ENCODE measurements at regions of chr1 and their contacts with region 1.

Region 1: GRCh38 chr1:226407497-226408284 is at the start of gene PARP1:
- DNase-seq: peak; percentile 99

Region 2: DNA sequence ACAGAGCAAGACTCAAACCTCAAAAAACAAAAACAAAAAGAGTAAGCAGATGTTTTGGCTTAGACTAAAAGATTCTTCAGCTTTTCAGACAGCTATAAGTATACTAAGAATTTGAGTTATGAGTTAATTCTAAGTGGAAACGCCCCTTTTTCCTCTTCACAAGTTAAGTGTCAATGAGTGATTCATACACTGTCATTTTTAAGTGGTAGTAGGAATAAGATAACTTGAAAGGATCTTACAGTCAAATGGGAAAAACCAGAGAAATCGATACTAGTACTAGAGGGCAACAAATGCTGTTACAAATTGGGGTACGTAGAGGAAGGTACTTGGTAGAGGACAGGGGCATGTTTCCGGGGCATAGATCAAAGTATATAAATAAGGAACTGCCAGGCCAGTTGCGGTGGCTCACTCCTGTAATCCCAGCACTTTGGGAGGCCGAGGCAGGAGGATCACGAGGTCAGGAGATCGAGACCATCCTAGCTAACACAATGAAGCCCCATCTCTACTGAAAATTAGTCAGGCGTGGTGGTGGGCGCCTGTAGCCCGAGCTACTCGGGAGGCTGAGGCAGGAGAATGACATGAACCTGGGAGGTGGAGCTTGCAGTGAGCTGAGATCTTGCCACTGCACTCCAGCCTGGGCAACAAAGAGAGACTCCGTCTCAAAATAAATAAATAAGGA is 337.7 kb before region 1 on chr1:
- CTCF ChIA-PET with region 1: no interaction called
- POLR2A ChIA-PET with region 1: no interaction called
- DNase-seq: no peak

Region 3: DNA sequence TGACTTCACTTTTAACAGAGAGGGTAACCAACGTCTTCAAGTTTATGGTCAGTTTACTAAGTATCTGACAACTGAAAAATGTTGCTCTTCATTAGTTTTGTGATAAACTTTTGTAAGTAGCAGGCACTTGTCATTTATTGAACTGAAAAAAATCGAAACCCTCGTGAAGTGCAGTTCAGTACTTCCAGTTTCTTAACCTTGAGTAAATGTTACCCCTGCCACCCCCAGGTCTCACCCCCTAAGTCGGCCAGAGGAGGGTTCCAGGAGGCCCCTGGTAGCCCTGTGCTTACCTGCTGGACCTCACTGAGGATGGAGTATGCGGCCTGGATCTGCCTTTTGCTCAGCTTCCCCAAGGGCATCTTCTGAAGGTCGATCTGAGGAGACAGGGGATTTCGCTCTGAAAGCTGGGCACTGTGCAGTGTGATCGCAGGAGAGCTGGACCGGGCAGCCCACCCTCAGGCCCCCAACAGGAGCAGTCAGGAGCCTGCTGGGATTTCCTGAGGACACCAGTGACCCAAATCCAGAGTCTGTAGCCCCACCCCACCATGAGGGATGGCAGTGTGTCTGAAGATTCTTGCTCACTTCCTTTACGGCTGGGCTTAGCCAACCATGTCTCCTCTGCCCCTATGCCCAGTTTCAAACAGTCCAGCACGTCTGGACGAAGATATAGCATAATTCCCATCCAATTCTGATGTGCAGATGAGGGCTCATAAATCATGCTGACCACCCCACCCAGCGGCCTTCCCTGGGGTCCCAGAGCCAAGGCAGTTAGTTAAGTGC is 37.4 kb before region 1 on chr1:
- CTCF ChIA-PET with region 1: no interaction called
- POLR2A ChIA-PET with region 1: no interaction called
- DNase-seq: no peak

Region 4: GRCh38 chr1:226424228-226425003 is 16.7 kb after region 1 on chr1:
- CTCF ChIA-PET with region 1: interaction called, 27 read pairs
- POLR2A ChIA-PET with region 1: interaction called, 11 read pairs
- DNase-seq: peak; percentile 66